ENCODE measurements at regions of chr15 and their contacts with region 1.

Region 1: DNA sequence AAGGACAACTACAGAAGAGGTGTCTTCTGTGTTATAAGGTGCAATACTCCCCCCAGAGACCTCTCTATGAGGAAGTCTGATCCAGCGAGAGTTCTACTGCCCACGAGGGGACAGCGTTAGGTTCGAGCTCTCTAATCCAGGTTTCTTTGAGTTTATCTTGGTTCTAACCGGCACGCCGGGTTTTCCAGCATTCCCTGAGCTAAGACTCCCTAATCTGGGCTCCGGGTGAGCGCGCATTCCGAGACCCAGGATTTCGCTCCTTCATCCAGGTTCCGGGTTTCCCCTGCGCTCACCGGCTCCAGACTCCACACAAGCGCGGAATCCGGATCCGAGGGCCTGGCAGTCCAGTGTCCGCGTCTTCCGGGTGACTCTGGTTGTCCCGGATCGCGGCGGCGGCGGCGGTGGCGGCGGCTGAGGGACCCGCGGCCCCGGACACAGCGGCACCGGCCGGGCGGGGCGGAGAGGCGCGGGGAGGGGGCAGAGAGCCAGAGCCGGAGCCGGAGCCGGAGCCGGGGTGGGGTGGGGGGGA is at the start of gene ZNF609:
- DNase-seq: peak; percentile 98
- H3K4me3 Mint-ChIP-seq: peak within 1 kb of the TSS; percentile 92
- H3K27ac Mint-ChIP-seq: peak within 1 kb of the TSS; percentile 90
- H3K4me1 Mint-ChIP-seq: peaks cover 60% of the 10 kb centered on the region
- H3K27me3 Mint-ChIP-seq: no peaks in the 10 kb centered on the region
- total RNA-seq, gene ZNF609: 62.4 and 63.9 TPM in 2 replicates

Region 2: DNA sequence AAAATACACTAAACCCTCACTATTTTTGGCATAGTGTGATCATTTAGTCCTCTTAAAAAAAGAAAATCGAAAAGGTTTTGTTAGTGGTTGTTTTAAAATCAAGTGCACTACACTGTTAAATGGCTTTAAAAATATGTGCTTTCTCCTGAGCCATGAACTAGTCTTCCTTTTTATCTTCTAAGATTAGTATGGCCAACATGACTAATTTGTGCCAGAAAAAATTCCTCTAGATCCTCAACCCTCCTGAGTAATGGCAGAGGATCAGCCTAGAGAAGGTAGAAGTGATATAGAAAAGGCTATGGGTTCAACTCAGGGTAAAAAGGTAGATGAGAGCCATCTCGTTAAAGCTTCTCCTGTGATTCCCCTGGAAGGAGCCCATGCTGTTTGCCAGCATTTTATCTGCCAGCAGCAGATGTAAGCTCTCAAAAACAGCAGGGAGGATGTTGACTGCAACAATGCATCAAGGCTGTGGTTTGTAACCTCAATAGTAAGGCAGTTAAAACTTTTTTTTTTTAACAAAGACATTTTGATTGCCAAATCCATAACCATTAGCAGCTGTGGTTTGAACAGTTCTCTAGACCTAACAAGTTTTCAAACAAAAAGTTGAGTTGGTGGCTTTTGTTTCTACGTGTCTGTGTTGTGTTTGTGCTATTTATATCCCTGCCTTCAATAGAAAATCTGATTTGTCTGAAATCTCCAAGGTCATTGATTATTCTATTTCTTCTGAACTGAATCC is 30.1 kb before region 1 on chr15:
- intact Hi-C with region 1: loop called (anchors 1 kb)
- DNase-seq: peak; percentile 87
- H3K4me3 Mint-ChIP-seq: peak overlapping the region; percentile 79
- H3K27ac Mint-ChIP-seq: peak overlapping the region; percentile 95
- H3K4me1 Mint-ChIP-seq: peaks cover 40% of the 10 kb centered on the region
- H3K27me3 Mint-ChIP-seq: no peaks in the 10 kb centered on the region

Region 3: DNA sequence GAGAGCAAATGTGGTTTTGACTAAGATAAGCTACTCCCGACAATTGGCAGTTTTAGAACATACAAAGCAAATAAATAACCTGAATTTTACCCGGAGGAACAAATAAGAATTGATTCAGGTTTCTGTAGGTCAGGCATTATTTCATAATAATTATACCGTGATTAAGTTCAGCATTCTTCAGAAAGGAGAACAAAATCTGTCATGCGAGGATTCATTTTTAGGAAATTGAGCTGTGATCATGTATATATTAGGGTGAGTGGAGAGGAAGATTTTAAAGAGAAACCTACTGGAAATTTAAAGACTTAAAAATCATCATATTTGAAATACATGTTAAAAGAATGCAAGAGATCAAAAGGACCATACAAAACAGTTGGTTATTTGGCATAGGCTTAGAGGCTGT is 20.6 kb after region 1 on chr15:
- intact Hi-C with region 1: no loop called
- DNase-seq: no peak
- H3K4me3 Mint-ChIP-seq: no peak overlapping the region
- H3K27ac Mint-ChIP-seq: no peak overlapping the region
- H3K4me1 Mint-ChIP-seq: peaks cover 16% of the 10 kb centered on the region
- H3K27me3 Mint-ChIP-seq: no peaks in the 10 kb centered on the region

Region 4: DNA sequence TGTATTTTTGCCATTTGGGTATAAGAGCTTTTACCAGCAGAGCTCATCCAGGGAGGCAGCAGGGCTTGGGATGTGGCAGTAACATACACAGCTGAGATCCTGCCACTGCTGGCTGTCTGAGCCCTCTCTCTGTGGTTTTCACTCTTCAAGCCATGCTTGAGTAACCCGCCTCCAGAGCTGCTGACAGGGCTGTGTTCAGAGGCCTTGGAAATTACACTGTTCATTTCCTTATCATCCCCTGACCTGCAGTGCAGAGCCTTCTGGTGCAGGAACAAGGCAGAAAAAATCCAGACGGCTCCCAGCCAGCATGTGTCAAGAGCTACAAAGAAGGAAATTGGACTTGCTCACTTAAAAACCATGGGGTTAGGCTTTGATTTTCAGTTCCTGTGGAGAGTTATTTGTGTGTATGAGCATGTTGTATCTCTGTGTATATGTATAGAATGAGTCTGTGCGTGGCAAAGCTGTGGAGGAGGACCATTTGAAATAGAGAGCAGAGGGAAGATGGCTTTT is 47.1 kb after region 1 on chr15:
- intact Hi-C with region 1: loop called (anchors 5 kb)
- DNase-seq: peak; percentile 77
- H3K4me3 Mint-ChIP-seq: peak overlapping the region; percentile 18
- H3K27ac Mint-ChIP-seq: peak overlapping the region; percentile 67
- H3K4me1 Mint-ChIP-seq: peaks cover 55% of the 10 kb centered on the region
- H3K27me3 Mint-ChIP-seq: no peaks in the 10 kb centered on the region

Region 5: GRCh38 chr15:64521726-64522164 is 61.5 kb after region 1 on chr15:
- intact Hi-C with region 1: no loop called
- DNase-seq: no peak
- H3K4me3 Mint-ChIP-seq: no peak overlapping the region
- H3K27ac Mint-ChIP-seq: no peak overlapping the region
- H3K4me1 Mint-ChIP-seq: peaks cover 32% of the 10 kb centered on the region
- H3K27me3 Mint-ChIP-seq: no peaks in the 10 kb centered on the region

Region 6: GRCh38 chr15:64582202-64582601 is 121.9 kb after region 1 on chr15:
- intact Hi-C with region 1: loop called (anchors 5 kb)
- DNase-seq: no peak
- H3K4me3 Mint-ChIP-seq: no peak overlapping the region
- H3K27ac Mint-ChIP-seq: no peak overlapping the region
- H3K4me1 Mint-ChIP-seq: peaks cover 27% of the 10 kb centered on the region
- H3K27me3 Mint-ChIP-seq: no peaks in the 10 kb centered on the region

Measured in activated CD4-positive, alpha-beta T cell treated with anti-CD3 and anti-CD28 coated beads, Interleukin-2, amount 10 ng/mL, durations not matched to agents 24 days and 14 days (primary cell).